Aorta (tissue), 5 donors: ENCODE measurements at regions of chr4 and their contacts with region 1.

Region 1: DNA sequence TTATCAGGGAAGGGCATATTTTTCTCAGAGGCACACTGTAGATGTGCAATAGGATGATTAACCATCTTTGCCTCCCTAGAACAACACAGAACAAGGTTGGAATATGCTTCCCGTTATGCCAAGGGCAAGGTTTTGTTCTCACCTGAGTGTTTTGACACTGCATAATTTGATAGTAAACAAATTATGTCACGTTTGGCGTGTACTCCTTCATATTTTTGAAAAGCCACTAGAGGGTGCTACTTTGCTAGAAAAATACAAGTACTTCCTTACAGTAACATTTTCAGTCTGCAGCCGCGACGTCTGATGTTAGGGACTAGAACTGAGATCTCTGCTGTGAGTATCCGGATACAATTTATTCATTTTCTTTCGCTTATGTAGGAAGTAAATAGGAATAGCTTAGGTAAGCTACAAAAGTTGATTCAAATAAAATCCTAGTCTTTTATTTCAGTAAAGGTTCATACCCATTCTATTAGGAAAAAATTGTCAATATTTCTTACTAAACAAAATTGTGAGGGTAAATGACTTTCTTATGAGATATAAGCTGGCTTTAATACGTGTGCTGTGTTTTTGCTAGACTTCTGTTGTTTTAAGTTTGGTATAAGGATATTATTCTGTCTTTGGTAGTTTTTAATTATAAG is 181.1 kb upstream of the WDFY3 start:
- DNase-seq: peak in 1 of 2 donors; percentile 61
- ATAC-seq: peak; percentile 71
- H3K4me3 ChIP-seq: no peak overlapping the region
- H3K27ac ChIP-seq: no peak overlapping the region
- H3K4me1 ChIP-seq: no peaks in the 10 kb centered on the region
- H3K27me3 ChIP-seq: no peaks in the 10 kb centered on the region

Region 2: GRCh38 chr4:85658766-85659439 is 511.3 kb after region 1 on chr4:
- intact Hi-C with region 1: no loop called
- DNase-seq: no peak
- ATAC-seq: peak; percentile 50
- H3K4me3 ChIP-seq: no peak overlapping the region
- H3K27ac ChIP-seq: no peak overlapping the region
- H3K4me1 ChIP-seq: no peaks in the 10 kb centered on the region
- H3K27me3 ChIP-seq: no peaks in the 10 kb centered on the region

Region 3: GRCh38 chr4:85747882-85748491 is 600.4 kb after region 1 on chr4:
- intact Hi-C with region 1: loop called (anchors 5 kb)
- DNase-seq: no peak
- ATAC-seq: peak; percentile 85
- H3K4me3 ChIP-seq: no peak overlapping the region
- H3K27ac ChIP-seq: no peak overlapping the region
- H3K4me1 ChIP-seq: no peaks in the 10 kb centered on the region
- H3K27me3 ChIP-seq: no peaks in the 10 kb centered on the region

Region 4: GRCh38 chr4:86043755-86044592 is 896.4 kb after region 1 on chr4:
- intact Hi-C with region 1: loop called (anchors 5 kb)
- DNase-seq: no peak
- ATAC-seq: peak; percentile 68
- H3K4me3 ChIP-seq: no peak overlapping the region
- H3K27ac ChIP-seq: no peak overlapping the region
- H3K4me1 ChIP-seq: no peaks in the 10 kb centered on the region
- H3K27me3 ChIP-seq: no peaks in the 10 kb centered on the region